Posterior cingulate gyrus (tissue), 11 donors: ENCODE measurements at regions of chr1 and their contacts with region 1.

Region 1: DNA sequence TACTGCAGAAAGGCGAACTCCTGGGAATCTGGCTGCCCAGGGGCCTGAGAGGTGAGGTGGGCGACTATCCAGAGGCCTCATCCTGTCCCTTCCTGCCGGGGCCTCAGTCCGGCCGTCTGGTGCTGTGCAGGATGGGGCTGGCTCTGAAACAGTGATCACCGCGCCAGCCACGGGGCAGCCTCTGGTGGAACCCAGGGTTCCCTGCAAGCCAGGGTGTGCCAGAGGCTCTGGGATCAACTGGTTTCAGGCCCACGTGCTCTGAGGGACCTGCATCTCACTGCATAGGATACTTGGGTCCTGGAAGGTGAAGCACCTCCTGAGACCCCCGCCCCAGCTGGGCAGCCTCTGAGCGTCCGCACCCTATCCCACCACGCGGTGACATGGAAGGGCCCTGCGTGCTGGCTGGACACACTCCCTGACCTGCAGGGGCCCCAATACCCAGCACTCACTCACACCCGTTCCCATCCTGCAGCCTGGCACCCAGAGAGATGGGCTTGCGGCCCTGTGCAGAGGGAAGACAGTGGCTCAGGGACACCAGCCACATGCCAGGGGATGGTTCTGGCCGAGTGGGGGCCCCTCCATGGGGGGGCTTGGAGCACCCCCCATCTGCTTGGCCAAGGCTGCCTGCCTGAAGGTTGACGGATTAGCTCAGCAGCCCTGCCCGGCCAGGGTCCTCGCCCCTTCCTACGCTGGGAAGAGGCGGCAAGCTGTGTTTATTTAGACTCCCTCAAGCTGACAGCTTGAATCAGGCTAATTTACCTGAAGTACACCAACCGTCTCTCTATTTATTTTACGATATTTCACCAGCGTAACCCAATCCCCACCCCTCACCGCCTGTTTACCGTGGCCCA is 64.3 kb upstream of the TTC34 start:
- DNase-seq: peak in 1 of 10 donors; percentile 78

Region 2: GRCh38 chr1:2928366-2929325 is 62.9 kb after region 1 on chr1:
- intact Hi-C with region 1: no loop called
- DNase-seq: peak in 7 of 10 donors; percentile 35 to 92 (median 53)

Region 3: DNA sequence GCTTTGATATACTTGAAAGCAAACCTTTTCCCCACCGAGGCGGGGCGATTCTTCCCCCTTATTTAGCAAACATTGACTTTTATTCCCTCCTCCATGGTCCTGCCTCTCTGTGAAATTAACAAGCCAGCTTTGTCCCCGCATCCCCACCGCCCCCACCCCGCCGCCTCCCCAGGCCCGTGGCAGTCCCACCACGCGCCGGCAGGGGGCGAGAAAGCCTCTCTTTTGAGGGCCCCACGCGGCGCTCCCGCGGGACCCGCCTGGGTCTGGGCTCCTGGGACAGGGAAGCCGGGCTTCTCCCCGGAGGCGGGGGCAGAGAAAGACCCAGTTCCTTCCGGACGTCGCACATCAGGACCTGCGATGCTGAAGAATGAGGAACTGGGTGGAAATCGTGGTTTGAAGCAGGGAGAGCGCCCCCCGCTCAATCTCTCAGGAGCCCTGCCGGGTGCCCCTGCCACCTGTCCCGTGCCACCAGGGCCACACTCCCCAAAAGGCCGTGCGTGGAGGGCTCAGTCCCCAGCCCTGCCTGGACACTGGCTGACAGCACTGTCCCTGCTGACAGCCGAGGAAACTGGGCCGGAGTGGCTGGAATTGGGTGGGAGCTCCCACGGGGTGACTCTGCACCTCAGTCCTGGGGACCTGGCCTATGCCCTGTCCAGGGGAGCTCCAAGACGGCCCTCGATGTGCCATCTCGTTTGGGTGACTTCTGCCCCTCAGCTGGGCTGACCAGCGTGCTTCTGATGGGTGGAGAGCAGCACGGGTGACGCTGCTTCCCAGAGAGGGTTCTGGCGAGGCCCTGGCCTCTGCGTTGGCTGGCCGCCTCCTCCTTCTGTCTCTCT is 146.9 kb after region 1 on chr1:
- intact Hi-C with region 1: no loop called
- DNase-seq: peak; percentile 59 to 96 (median 84)

Region 4: GRCh38 chr1:3066250-3066711 is 200.5 kb after region 1 on chr1:
- intact Hi-C with region 1: no loop called
- DNase-seq: peak in 6 of 10 donors; percentile 30 to 83 (median 50)

Region 5: DNA sequence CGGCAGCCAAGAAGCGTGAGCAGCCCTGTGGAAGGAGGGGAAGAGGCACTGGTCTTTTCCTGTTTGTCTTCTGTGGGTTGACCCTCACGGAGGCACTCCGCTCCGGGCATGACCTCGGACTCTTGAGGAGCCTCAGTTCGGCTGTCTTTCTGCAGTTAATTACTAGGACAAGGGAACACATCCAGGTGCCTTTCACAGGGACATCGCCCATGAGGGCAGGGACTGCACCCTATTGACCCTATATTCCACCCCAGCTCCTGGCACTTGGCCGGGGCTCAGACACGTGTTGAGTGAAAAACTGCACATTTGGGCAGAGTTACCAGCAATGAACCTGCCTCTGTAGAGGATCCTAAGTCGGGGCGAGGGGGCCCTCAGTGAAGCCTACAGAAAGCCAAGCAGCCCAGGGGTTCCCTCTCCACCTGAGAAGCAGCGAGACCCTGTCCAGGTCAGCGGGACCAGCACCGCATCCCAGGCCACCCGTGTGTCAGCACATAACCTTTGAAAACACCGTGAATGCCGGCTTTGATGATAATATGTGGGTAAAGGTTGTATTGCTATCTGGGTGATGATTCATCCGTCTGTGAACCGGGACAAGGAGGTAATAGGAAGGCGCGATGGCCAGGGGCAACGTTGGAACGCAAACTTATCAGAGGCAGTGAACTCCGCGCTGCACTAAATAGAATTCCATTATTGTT is 427.2 kb after region 1 on chr1:
- intact Hi-C with region 1: loop called (anchors 10 kb)
- DNase-seq: no peak